Activated CD4-positive, alpha-beta memory T cell treated with anti-CD3 and anti-CD28 coated beads for 36 hours (primary cell): ENCODE measurements at regions of chr1 and their contacts with region 1.

Region 1: DNA sequence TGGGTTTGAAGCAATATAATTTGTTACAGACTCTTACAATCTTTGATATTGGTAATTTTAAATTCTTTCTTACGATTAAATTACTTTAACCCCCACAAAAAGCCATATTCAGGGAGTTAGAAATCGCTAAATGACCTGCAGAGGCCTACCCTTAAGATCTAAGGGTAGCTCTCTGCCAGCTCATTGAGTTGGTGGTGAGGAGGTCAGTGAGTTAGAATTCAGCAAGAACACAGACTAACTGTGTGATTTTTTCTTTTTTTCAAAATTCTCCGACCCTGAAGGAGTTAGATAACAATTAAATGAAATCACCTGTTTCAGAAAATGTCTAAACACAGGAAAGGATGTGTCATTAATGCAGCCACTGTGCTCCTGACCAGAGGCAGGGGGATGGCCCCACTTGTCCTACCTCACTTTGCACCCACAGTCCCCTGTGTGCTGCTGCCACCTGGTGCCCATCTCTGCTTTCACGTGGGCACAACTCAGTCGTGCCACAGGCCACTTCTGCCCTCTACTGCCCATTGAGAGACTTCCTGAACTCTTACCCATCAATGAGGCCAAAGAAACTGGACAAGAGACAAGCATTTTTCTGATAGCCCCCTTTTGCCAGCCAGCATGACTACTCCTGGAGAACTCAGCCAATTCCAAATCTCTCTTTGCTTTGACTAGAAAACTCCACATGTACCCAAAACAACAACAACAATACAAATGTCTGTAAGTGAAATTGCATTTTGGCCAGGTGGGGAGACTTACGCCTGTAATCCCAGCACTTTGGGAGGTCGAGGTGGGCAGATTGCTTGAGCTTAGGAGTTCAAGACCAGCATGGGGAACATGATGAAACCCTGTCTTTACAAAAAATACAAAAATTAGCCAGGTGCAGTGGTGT is 8.4 kb downstream of the CFAP45 start:
- DNase-seq: peak; percentile 89
- H3K4me3 Mint-ChIP-seq: no peak overlapping the region
- H3K27ac Mint-ChIP-seq: no peak overlapping the region
- H3K4me1 Mint-ChIP-seq: peaks cover 9% of the 10 kb centered on the region
- H3K27me3 Mint-ChIP-seq: no peaks in the 10 kb centered on the region

Region 2: DNA sequence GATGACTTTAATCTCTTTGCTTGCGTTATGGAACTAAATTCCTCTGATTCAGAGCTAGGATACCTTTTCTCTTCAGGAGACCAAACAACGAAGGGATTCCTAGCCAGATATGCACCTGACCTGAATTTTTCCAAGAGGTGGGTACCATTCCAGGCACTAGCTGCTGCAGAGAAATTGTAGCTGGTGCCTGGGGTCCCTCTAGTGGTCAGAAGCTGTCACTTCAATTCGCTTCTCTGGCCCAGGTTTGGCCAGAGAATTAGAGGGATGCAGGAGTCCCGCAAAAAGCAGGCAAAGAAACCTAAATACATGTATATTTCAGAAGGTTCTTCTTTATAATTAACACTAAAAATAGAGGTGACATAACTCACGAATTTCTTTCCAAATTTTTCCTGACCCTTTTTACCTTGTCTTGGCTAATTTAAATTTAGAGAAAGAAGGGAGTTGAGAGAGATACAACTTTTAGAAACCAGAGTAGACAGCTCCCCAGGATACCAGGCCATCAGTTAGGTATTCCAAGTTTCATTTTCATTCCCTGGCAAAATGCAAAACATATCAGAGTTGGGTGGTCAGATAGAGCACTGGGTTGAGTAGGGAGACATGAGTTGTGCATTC is 677.3 kb before region 1 on chr1:
- CTCF ChIA-PET with region 1: interaction called, 6 read pairs
- POLR2A ChIA-PET with region 1: no interaction called
- intact Hi-C with region 1: loop called (anchors 5 kb)
- DNase-seq: peak; percentile 54
- H3K4me3 Mint-ChIP-seq: no peak overlapping the region
- H3K27ac Mint-ChIP-seq: no peak overlapping the region
- H3K4me1 Mint-ChIP-seq: no peaks in the 10 kb centered on the region
- H3K27me3 Mint-ChIP-seq: peaks cover 29% of the 10 kb centered on the region

Region 3: GRCh38 chr1:159780583-159781582 is 110.6 kb before region 1 on chr1 and contains the start of gene DUSP23:
- CTCF ChIA-PET with region 1: interaction called, 28 read pairs
- POLR2A ChIA-PET with region 1: no interaction called
- intact Hi-C with region 1: loop called (anchors 1 kb)
- DNase-seq: peak; percentile 98
- H3K4me3 Mint-ChIP-seq: peak within 1 kb of the TSS; percentile 78
- H3K27ac Mint-ChIP-seq: peak within 1 kb of the TSS; percentile 25
- H3K4me1 Mint-ChIP-seq: peaks cover 5% of the 10 kb centered on the region
- H3K27me3 Mint-ChIP-seq: no peaks in the 10 kb centered on the region
- total RNA-seq, gene DUSP23: 26.9 to 28.3 TPM

Region 4: GRCh38 chr1:159798893-159799292 is 92.6 kb before region 1 on chr1:
- CTCF ChIA-PET with region 1: interaction called, 431 read pairs
- POLR2A ChIA-PET with region 1: interaction called, 4 read pairs
- intact Hi-C with region 1: loop called (anchors 1 kb)
- DNase-seq: peak; percentile 61
- H3K4me3 Mint-ChIP-seq: no peak overlapping the region
- H3K27ac Mint-ChIP-seq: no peak overlapping the region
- H3K4me1 Mint-ChIP-seq: peaks cover 13% of the 10 kb centered on the region
- H3K27me3 Mint-ChIP-seq: peaks cover 3% of the 10 kb centered on the region

Region 5: DNA sequence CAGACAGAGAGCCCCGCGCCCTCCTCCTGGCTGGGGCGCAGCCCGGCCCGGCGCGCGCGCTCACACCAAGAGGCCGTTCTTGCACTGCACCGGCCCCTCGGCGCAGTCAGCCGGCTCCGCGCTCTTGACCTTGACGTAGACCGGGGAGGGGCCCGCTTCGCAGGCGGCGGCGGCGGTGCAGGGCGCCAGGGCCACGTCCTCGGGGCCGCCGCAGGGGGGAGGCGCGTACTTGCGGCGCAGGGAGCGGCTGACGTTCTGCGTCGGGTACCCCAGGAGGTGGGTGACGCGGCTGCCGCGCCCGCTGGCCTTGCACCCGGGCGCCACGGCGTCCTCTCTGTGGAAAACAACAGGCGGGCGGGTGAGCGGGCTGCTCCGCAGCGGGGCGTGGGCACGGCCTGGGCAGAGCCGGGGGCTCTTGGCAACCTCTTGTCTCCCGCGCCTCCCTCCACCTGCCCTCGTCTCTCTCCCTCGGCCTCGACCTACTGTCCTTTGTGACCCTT is 36.8 kb before region 1 on chr1:
- CTCF ChIA-PET with region 1: interaction called, 17 read pairs
- POLR2A ChIA-PET with region 1: no interaction called
- intact Hi-C with region 1: loop called (anchors 2 kb)
- DNase-seq: peak; percentile 86
- H3K4me3 Mint-ChIP-seq: peak overlapping the region; percentile 79
- H3K27ac Mint-ChIP-seq: peak overlapping the region; percentile 3
- H3K4me1 Mint-ChIP-seq: peaks cover 10% of the 10 kb centered on the region
- H3K27me3 Mint-ChIP-seq: no peaks in the 10 kb centered on the region

Region 6: GRCh38 chr1:159908031-159908940 is 16.8 kb after region 1 on chr1:
- CTCF ChIA-PET with region 1: interaction called, 10 read pairs
- POLR2A ChIA-PET with region 1: interaction called, 3 read pairs
- intact Hi-C with region 1: no loop called
- DNase-seq: no peak
- H3K4me3 Mint-ChIP-seq: no peak overlapping the region
- H3K27ac Mint-ChIP-seq: peak overlapping the region; percentile 7
- H3K4me1 Mint-ChIP-seq: peaks cover 39% of the 10 kb centered on the region
- H3K27me3 Mint-ChIP-seq: no peaks in the 10 kb centered on the region

Region 7: GRCh38 chr1:159945483-159946241 is 54.1 kb after region 1 on chr1 and contains the start of gene IGSF9:
- CTCF ChIA-PET with region 1: no interaction called
- POLR2A ChIA-PET with region 1: no interaction called
- intact Hi-C with region 1: no loop called
- DNase-seq: peak; percentile 67
- H3K4me3 Mint-ChIP-seq: peak within 1 kb of the TSS; percentile 20
- H3K27ac Mint-ChIP-seq: no peak within 1 kb of the TSS
- H3K4me1 Mint-ChIP-seq: peaks cover 3% of the 10 kb centered on the region
- H3K27me3 Mint-ChIP-seq: peaks cover 43% of the 10 kb centered on the region
- total RNA-seq, gene IGSF9: 0.05 TPM in 1 of 2 experiments, not detected in the other

Region 8: DNA sequence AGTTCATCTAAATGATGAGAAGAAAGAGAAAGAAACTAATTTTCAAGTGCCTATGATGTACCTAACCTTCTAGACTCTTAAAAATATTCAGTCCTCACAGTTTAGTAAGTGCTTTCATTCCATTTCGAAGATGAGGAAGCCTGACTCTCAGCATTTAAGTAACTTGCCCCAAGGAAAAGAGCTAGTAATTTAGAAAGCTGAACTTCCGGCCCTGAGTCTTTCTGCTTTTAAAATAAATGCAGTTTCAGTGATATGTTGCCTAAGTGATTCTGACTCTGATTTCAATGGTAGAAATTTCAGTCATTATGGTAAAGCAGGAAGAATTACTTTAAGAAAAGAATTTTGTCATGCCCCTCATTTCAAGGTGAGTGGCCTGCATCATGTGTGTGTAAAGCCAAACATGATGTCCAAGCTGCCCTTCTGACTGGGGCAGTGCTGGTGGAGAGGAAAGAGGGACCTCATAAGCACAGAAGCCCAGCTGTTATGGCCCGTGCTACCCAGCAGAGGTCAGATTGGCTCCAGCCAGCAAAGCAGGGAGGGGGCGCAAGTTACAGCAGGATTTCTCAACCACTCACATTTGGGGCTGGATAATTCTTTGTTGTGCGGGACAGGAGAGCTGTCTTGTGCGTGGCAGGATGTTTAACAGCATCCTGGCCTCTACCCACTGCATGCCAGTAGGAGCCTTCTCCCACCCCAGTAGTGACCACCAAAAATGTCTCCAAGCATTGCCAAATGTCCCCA is 270.6 kb after region 1 on chr1:
- CTCF ChIA-PET with region 1: no interaction called
- POLR2A ChIA-PET with region 1: no interaction called
- intact Hi-C with region 1: no loop called
- DNase-seq: no peak
- H3K4me3 Mint-ChIP-seq: no peak overlapping the region
- H3K27ac Mint-ChIP-seq: no peak overlapping the region
- H3K4me1 Mint-ChIP-seq: peaks cover 6% of the 10 kb centered on the region
- H3K27me3 Mint-ChIP-seq: peaks cover 5% of the 10 kb centered on the region